SK-N-SH (cell line): ENCODE measurements at regions of chr1 and their contacts with region 1.

Region 1: GRCh38 chr1:169928438-169929209 is 34.9 kb upstream of the SCYL3 start:
- DNase-seq: peak; percentile 28
- H3K4me3 ChIP-seq: no peak overlapping the region
- H3K27ac ChIP-seq: no peak overlapping the region
- H3K4me1 ChIP-seq: peaks cover 5 to 12% of the 10 kb centered on the region in 2 experiments; a peak in 2 of 4 replicates
- H3K27me3 ChIP-seq: no peaks in the 10 kb centered on the region
- CTCF ChIP-seq: peak; percentile 85
- EP300 ChIP-seq: no peak
- RAD21 ChIP-seq: peak; percentile 93

Region 2: DNA sequence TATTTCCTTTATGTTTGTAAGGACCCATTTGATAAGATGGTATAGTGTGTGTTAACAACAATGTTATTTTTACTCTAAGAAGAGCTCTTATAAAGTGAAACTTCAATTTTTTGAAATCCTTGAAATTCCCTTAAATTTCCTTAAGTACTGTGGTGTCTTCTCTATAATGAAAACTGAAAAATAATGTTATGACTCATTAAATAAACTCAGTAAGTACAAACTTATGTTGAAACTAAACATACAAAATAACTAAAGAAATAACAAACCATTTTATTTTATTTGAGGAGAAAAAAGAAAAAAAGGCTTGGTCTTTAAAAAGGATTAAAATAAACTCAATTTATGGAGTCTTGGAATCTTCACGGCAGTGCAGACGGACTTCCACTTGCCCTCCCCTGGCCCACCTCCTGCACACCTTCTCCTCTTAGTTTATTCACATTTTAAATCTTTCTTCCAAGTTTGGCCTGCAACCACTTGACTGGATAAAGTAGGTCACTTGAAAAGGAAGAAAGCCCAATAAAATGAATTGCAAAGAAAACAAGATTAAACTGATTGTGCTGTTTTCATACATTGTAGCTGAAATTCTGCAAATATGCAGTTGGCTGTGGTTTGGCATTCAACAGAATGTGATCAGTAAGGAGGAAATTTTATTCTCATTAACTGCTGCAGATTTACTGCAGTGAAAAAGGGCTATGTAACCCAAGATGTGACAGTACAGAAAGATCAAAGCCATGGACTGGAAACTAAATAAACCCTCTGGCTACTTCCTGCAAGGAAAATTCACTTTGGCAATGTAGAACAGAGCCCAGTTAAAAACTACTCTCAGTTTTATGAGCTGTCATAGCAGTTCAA is 13.6 kb after region 1 on chr1:
- CTCF ChIA-PET with region 1: interaction called, 11 read pairs
- POLR2A ChIA-PET with region 1: no interaction called
- DNase-seq: no peak
- H3K4me3 ChIP-seq: no peak overlapping the region
- H3K27ac ChIP-seq: peak overlapping the region; percentile 55 to 59; a peak in 3 of 4 replicates
- H3K4me1 ChIP-seq: peaks cover 11% of the 10 kb centered on the region in 2 experiments; a peak in 3 of 4 replicates
- H3K27me3 ChIP-seq: no peaks in the 10 kb centered on the region
- CTCF ChIP-seq: no peak
- EP300 ChIP-seq: 0 out of 4 replicates have a peak, but pooled peaks of 1 of the 2 experiments have one; percentile 18
- RAD21 ChIP-seq: no peak

Region 3: DNA sequence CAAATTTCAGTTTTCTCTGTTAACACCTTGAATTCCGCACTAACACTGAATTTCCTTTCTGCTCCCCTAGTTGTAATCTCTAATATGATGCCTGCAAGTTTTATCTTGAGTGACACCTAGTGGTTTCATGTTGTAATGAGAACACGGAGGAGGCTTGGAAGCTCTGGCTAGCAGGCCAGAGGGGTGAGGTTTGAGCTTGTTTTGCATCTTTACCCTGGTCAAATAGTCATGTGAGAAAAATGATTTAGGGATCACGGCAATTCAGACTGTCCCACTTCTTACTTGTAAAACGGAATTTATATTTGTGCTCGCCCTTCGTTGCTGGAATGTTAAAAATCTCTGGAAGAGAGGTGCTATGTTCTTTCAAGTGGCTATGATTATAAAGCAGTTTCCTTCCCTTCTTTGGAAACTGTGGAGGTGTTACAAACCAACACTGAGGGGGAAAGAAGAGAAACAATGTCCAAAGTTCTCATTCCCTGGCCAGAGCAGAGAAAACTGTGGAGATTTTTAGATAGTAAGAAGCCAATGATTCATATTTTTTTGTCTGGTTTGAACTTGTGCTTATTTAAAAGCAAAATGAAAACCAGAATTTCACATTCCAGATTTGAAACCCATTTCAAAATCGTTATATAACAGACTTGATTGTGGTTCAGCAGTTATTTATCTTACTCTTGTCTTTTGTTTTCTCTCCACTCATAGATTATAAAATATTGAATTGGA is 1001.4 kb after region 1 on chr1:
- CTCF ChIA-PET with region 1: interaction called, 16 read pairs
- POLR2A ChIA-PET with region 1: no interaction called
- DNase-seq: peak; percentile 49
- H3K4me3 ChIP-seq: peak overlapping the region; percentile 19 to 38; a peak in 3 of 4 replicates
- H3K27ac ChIP-seq: peak overlapping the region; percentile 84 to 94
- H3K4me1 ChIP-seq: peaks cover 0 to 15% of the 10 kb centered on the region in 2 experiments; a peak in 2 of 4 replicates
- H3K27me3 ChIP-seq: no peaks in the 10 kb centered on the region
- CTCF ChIP-seq: peak; percentile 87
- EP300 ChIP-seq: peak in 1 of 2 experiments; percentile 72; a peak in 2 of 4 replicates
- RAD21 ChIP-seq: peak; percentile 73